WTC11 (cell line): ENCODE measurements at regions of chr19 and their contacts with region 1.

Region 1: DNA sequence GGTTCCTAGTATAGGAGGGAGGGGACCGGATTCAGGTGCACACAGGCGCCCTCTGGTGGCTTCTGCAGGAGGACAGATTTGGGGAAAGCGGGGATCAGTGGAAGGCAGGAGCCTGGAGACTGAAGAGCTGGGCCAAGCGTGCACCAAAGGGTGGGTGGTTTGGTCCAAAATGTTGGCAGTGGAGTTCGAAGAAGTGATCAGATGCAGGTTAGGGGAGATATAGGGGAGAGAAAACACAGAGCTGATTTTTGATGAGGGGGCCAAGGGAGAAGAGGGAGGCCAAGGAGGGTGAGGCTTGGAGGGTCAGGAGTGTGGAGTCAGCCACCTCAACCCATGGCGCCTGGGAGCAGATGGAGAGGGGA is 6.8 kb upstream of the CARM1 start:
- DNase-seq: peak; percentile 91
- ATAC-seq: peak; percentile 91
- H3K4me3 Mint-ChIP-seq: no peak overlapping the region
- H3K27ac Mint-ChIP-seq: no peak overlapping the region
- H3K4me1 Mint-ChIP-seq: peaks cover 8% of the 10 kb centered on the region
- H3K27me3 Mint-ChIP-seq: no peaks in the 10 kb centered on the region; the same call in 1 of the 2 replicates
- CTCF ChIP-seq: peak; percentile 83

Region 2: DNA sequence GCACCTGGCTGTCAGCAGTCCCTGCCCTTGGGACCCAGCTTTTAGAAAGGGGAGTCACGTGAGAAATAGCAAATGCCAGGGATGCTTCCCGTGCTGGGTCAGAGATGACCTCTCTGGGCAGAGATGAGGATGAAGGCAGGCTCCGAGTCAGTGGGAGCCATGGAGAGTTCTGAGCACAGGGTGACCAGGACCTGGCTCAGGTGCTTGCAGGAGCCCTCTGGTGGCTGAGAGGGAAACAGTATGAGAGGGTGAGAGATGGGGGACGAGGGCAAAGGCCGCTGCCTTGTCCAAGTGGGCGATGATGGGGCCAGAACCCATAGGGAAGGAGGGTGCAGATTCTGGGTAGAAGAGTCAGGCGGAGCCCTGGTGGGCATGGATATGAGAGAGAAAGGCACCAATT is 44.3 kb before region 1 on chr19:
- CTCF ChIA-PET with region 1: interaction called, 13 read pairs
- POLR2A ChIA-PET with region 1: no interaction called
- DNase-seq: no peak
- ATAC-seq: peak; percentile 73
- H3K4me3 Mint-ChIP-seq: no peak overlapping the region
- H3K27ac Mint-ChIP-seq: no peak overlapping the region
- H3K4me1 Mint-ChIP-seq: no peaks in the 10 kb centered on the region
- H3K27me3 Mint-ChIP-seq: no peaks in the 10 kb centered on the region; the same call in 1 of the 2 replicates
- CTCF ChIP-seq: no peak

Region 3: DNA sequence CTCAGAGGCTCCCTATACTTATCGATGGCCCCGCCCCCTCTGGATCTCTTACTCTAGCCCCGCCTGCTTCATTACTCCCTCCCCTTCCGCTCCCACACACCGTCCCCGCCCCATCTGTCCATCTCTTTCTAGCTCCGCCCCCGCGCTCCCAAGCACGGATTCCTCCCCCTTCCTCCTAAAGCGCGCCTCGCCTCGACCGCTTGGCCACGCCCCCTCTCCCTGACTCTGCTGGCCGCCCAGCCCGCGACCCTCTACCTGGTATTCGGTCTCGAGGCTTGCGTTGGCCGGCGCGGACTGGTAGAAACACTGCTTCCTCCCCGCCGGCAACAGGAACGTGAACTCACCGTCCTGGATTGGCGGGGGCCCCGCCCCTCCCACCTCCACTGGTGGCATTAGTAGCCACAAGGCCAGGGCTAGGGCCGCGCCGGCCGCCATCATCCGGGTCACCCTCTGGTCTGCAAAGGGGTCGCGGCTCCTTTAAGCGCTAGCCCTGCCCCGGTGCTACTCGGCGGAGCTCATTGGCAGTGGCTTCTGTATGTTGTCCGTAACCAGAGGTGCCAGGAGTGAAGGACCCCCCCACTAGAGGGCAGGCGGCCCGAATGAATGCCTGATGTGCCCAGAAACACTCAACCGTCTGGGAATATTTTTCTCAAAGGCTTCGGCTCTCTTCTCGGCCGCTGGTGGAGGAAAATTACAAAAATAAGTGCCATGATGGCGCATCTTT is 28.6 kb before region 1 on chr19 and contains the start of gene TMED1:
- CTCF ChIA-PET with region 1: interaction called, 135 read pairs
- POLR2A ChIA-PET with region 1: no interaction called
- DNase-seq: peak; percentile 100
- ATAC-seq: peak; percentile 93
- H3K4me3 Mint-ChIP-seq: peak within 1 kb of the TSS; percentile 85
- H3K27ac Mint-ChIP-seq: peak within 1 kb of the TSS; percentile 100
- H3K4me1 Mint-ChIP-seq: peaks cover 13% of the 10 kb centered on the region
- H3K27me3 Mint-ChIP-seq: peaks cover 24% of the 10 kb centered on the region
- CTCF ChIP-seq: peak; percentile 36; the same call in 1 of the 2 replicates
- total RNA-seq, gene TMED1: 28.5 to 40.9 TPM (median 40.6 TPM) in 3 replicates

Region 4: DNA sequence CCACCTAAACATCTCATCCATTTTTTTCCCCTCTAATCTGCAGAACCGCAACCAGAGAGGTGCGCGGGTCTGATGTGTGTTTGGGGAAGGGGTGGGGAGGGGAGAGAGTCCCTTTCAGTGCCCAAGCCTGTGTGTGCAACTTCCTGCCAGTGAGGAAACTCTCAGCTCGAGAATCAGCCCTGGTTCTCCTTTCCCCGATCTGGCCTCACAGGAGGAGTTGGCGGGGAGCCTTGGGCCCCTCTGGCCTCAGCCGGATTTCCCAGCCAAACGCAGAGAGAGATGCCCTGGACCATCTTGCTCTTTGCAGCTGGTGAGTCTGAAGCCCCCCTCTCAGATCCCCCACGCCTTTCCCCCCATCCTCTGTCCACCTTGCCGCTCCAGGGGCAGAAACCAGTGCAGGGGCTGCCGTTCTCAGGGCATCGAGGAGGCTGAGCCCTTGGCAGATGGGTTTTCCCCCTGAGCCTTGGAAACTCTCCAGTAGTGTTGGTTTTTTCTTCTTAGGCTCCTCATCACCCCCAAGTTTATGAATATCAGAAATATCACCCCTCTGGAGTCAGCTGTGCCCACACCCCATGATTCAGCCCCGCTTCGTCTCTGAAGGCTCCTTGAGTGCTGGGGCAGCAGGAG is 16.2 kb before region 1 on chr19 and contains the start of gene C19orf38:
- CTCF ChIA-PET with region 1: interaction called, 75 read pairs
- POLR2A ChIA-PET with region 1: no interaction called
- DNase-seq: no peak
- ATAC-seq: no peak
- H3K4me3 Mint-ChIP-seq: no peak within 1 kb of the TSS
- H3K27ac Mint-ChIP-seq: no peak within 1 kb of the TSS
- H3K4me1 Mint-ChIP-seq: no peaks in the 10 kb centered on the region
- H3K27me3 Mint-ChIP-seq: peaks cover 36% of the 10 kb centered on the region
- CTCF ChIP-seq: no peak
- total RNA-seq, gene C19orf38: 0.23 TPM in 1 of 3 replicates, not detected in the others

Region 5: DNA sequence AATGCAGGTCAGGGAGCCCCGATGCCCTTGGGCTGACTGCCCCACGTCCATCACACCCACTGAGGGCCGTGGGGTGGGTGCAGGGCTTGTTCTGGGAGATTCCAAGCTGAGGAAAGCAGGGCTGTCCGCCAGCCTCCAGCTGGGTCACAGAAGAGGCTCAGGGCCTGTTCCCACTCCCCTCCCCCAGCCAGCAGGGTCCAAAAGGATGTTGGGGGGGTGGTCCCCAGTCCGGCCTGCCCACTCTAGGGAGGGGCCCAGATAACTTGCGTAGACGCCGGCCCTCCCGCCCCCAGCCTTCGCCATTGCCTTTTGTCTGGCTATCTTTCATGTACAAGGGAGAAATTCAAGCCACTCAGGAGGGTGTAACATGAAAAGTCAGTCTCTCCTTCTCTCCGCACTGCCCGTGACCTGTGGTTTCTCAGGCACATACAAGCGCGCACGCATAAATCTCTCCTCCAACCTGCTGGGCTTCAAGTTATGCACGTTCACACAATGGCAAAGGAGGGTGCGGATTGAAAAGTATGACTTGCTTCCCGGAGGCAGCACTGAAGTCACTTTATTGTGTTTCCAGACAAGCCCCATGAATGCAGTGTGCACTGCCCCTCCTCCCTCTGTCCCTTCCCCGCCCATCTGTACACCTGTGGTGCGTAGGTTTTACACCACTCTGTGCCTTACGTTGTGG is 27.0 kb after region 1 on chr19:
- CTCF ChIA-PET with region 1: interaction called, 25 read pairs
- POLR2A ChIA-PET with region 1: no interaction called
- DNase-seq: no peak
- ATAC-seq: peak; percentile 6; the same call in 1 of the 2 replicates
- H3K4me3 Mint-ChIP-seq: peak overlapping the region; percentile 20
- H3K27ac Mint-ChIP-seq: peak overlapping the region; percentile 94
- H3K4me1 Mint-ChIP-seq: peaks cover 70% of the 10 kb centered on the region
- H3K27me3 Mint-ChIP-seq: no peaks in the 10 kb centered on the region
- CTCF ChIP-seq: no peak